H1 (cell line): ENCODE measurements at regions of chr6 and their contacts with region 1.

Region 1: DNA sequence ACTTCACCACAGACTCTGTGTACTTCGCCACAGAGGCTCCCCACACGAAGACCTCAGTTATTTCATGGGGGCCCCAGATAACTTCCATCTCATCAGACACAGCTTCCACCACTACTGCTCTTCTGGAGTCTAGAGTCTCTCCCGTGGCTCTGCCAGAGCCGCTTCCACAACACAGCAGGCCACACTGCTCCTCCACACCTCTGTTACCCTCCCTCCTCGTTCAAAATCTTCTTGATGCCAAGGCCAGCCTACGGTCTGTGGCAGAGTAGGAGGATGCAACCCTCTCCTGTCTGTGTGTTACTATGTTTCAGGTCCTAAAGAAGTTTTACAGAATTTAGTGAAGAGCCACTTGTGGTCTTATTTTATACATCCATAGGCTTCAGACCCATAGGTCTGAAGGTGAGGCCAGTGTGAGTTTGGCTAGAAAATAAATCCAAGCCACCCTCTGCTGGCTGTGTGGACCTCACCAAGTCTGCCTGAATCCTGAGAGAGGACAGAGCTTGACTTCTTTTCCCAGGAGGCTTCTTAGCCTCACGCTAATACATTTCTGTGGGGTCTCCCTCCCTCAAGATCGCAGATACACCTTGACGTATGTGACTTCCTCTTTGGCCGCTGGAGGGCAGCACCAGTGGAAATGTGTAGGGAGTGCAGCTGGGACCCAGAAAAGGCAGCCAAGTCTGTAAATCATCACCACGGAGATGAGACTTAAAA is 197.7 kb downstream of the FAXC start:
- DNase-seq: peak; percentile 33 to 89
- H3K4me3 ChIP-seq: no peak overlapping the region
- H3K27ac ChIP-seq: no peak overlapping the region
- H3K4me1 ChIP-seq: peaks cover 0 to 6% (median 0%) of the 10 kb centered on the region in 4 experiments; a peak in 1 of 7 replicates
- H3K27me3 ChIP-seq: no peaks in the 10 kb centered on the region
- CTCF ChIP-seq: peak; percentile 72 to 92 (median 82)
- EP300 ChIP-seq: no peak
- POLR2A ChIP-seq: no peak
- RAD21 ChIP-seq: peak; percentile 65 to 71

Region 2: DNA sequence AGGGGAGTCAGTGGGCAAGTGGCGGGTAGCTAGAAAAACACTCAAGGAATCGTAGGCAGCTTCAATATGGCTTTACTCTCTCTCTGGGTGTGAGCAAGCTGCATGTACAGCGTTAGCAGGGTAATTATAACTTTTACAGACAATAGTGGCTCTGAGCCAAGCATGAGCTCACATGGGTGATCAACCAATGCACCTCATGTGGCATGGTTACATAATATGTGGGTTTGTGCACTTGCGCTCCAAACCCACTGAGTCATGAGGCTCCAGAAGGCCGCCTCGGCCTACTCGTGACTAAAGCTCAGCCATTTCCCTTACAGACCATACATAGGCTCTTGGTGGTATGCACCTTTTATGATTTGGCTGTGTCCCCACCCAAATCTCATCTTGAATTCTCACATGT is 125.7 kb before region 1 on chr6:
- CTCF ChIA-PET with region 1: no interaction called
- POLR2A ChIA-PET with region 1: no interaction called
- DNase-seq: no peak
- H3K4me3 ChIP-seq: no peak overlapping the region
- H3K27ac ChIP-seq: no peak overlapping the region
- H3K4me1 ChIP-seq: no peaks in the 10 kb centered on the region
- H3K27me3 ChIP-seq: no peaks in the 10 kb centered on the region
- CTCF ChIP-seq: no peak
- EP300 ChIP-seq: no peak
- POLR2A ChIP-seq: no peak
- RAD21 ChIP-seq: no peak

Region 3: GRCh38 chr6:99064834-99065233 is 87.0 kb before region 1 on chr6:
- CTCF ChIA-PET with region 1: no interaction called
- POLR2A ChIA-PET with region 1: no interaction called
- DNase-seq: no peak
- H3K4me3 ChIP-seq: no peak overlapping the region
- H3K27ac ChIP-seq: no peak overlapping the region
- H3K4me1 ChIP-seq: no peaks in the 10 kb centered on the region
- H3K27me3 ChIP-seq: no peaks in the 10 kb centered on the region
- CTCF ChIP-seq: no peak
- EP300 ChIP-seq: no peak
- POLR2A ChIP-seq: no peak
- RAD21 ChIP-seq: no peak

Region 4: GRCh38 chr6:99138445-99138844 is 13.3 kb before region 1 on chr6:
- CTCF ChIA-PET with region 1: interaction called, 19 read pairs
- POLR2A ChIA-PET with region 1: no interaction called
- DNase-seq: no peak
- H3K4me3 ChIP-seq: no peak overlapping the region
- H3K27ac ChIP-seq: no peak overlapping the region
- H3K4me1 ChIP-seq: no peaks in the 10 kb centered on the region
- H3K27me3 ChIP-seq: no peaks in the 10 kb centered on the region
- CTCF ChIP-seq: no peak
- EP300 ChIP-seq: no peak
- POLR2A ChIP-seq: no peak
- RAD21 ChIP-seq: no peak

Region 5: DNA sequence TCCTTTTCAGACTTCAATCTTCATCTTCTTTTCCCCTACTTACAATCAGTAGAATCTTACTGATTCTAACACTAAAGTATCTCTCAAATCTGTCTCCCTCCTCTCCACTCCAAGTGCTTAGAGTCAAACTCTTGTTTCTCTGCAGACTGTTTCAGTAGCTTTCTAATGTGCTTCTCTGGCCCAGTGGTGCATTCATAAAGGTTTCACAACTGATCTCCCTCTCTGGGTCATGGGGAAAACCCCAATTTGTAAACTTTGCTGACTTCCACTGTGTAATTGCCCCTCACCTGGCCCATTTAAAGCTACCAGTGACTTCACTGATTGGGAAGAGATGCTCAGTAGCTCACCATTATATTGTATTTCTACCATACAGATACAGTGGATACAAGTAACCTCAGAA is 14.0 kb after region 1 on chr6:
- CTCF ChIA-PET with region 1: interaction called, 32 read pairs
- POLR2A ChIA-PET with region 1: no interaction called
- DNase-seq: no peak
- H3K4me3 ChIP-seq: no peak overlapping the region
- H3K27ac ChIP-seq: no peak overlapping the region
- H3K4me1 ChIP-seq: no peaks in the 10 kb centered on the region
- H3K27me3 ChIP-seq: peaks cover 0 to 2% (median under 1%) of the 10 kb centered on the region in 4 experiments; a peak in 1 of 7 replicates
- CTCF ChIP-seq: no peak
- EP300 ChIP-seq: no peak
- POLR2A ChIP-seq: no peak
- RAD21 ChIP-seq: no peak

Region 6: GRCh38 chr6:99219788-99220187 is 68.0 kb after region 1 on chr6:
- CTCF ChIA-PET with region 1: interaction called, 23 read pairs
- POLR2A ChIA-PET with region 1: no interaction called
- DNase-seq: peak; percentile 67 to 73
- H3K4me3 ChIP-seq: no peak overlapping the region
- H3K27ac ChIP-seq: no peak overlapping the region
- H3K4me1 ChIP-seq: peaks cover 0 to 4% (median 2%) of the 10 kb centered on the region in 4 experiments; a peak in 4 of 7 replicates
- H3K27me3 ChIP-seq: no peaks in the 10 kb centered on the region
- CTCF ChIP-seq: peak; percentile 59 to 68 (median 62)
- EP300 ChIP-seq: no peak
- POLR2A ChIP-seq: no peak
- RAD21 ChIP-seq: peak; percentile 48 to 65; a peak in 3 of 4 replicates

Region 7: GRCh38 chr6:99225172-99225571 is 73.4 kb after region 1 on chr6:
- CTCF ChIA-PET with region 1: interaction called, 23 read pairs
- POLR2A ChIA-PET with region 1: no interaction called
- DNase-seq: no peak
- H3K4me3 ChIP-seq: no peak overlapping the region
- H3K27ac ChIP-seq: no peak overlapping the region
- H3K4me1 ChIP-seq: peaks cover 0 to 2% (median 0%) of the 10 kb centered on the region in 4 experiments; a peak in 2 of 7 replicates
- H3K27me3 ChIP-seq: no peaks in the 10 kb centered on the region
- CTCF ChIP-seq: no peak
- EP300 ChIP-seq: no peak
- POLR2A ChIP-seq: no peak
- RAD21 ChIP-seq: no peak

Region 8: DNA sequence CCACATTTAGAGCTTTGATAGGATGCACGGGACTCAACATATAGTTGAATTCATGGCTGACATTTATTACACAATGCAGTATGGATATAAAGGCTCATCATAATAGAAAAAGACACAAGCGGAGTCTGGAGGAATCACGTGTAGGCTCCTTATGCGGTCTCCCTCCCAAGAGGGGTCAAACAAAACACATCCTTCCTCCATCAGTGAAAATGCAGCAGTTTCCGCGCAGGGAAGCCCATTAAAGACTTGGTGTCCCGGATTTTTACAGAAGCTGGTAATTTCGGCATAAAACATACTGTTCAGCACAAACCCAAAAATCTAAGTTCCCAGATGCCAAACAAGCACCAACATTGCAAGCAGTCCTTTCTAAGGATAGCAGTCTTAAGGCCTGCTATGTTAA is 362.3 kb after region 1 on chr6:
- CTCF ChIA-PET with region 1: no interaction called
- POLR2A ChIA-PET with region 1: no interaction called
- DNase-seq: no peak
- H3K4me3 ChIP-seq: peak overlapping the region; percentile 78 to 92 (median 82)
- H3K27ac ChIP-seq: no peak overlapping the region
- H3K4me1 ChIP-seq: peaks cover 2 to 5% (median 4%) of the 10 kb centered on the region in 4 experiments; a peak in 4 of 7 replicates
- H3K27me3 ChIP-seq: no peaks in the 10 kb centered on the region
- CTCF ChIP-seq: no peak
- EP300 ChIP-seq: no peak
- POLR2A ChIP-seq: no peak; a peak in 1 of 3 replicates
- RAD21 ChIP-seq: no peak